ENCODE measurements at regions of chr10 and their contacts with region 1.

Region 1: DNA sequence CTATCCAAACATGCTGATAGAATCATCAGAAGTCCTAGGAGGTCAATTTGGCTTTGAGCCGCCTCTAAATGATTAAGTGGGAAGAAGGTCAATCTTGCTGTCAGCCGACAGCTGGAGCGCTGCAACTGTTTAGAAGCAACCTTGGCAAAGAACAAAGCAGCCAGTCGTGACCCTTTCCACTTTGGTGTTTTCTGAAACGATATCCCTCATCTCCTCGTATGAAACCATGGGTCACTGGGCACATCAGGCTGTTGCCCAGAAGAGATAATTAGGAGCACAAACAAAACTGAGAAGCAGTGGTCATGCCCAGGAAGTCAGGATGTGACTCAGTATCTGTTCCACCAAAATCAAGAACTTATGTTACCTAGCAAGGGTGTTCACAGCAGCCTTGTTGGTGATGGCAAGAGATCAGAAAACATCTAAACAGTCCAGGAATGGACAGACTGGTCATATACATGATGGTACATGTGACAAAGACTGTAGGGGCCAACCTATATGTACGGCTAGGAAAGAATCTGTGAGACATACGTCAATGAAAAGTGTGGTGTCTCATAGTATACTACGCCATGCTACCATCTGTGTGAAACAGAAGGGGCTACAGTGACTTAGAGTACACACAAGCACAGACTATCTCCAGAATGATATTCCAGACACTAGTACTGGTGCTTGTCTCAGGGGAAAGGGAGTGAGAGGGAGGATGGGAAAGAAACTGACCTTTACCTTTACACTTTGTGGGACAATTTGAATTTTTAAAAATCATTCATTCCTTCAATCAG is 22.4 kb downstream of the STN1 start:
- DNase-seq: peak in 1 of 2 experiments; percentile 90
- H3K4me3 ChIP-seq: peak overlapping the region; percentile 2; the same call in 1 of the 2 replicates
- H3K27ac ChIP-seq: peak overlapping the region; percentile 99
- H3K4me1 ChIP-seq: peaks cover 72% of the 10 kb centered on the region
- H3K27me3 ChIP-seq: no peaks in the 10 kb centered on the region
- CTCF ChIP-seq: no peak

Region 2: DNA sequence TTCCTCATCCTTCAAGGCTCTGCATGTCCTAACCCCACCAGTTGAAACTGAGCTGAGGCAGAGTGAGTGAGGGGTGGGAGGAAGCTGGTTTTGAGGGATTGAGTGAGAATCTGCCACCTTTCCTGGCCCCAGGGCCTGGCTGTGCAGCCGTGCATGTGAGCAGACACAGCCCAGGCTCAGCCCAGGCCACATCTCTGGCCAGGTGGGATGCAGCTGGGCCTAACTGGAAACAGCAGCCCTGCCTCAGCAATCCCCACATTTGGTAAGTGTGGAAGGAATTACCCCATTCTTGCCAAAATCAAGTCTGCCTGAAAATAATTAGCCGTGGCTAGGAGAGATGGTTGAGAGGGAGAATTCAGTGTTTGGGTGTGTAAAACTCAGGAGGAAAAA is 285.5 kb before region 1 on chr10:
- CTCF ChIA-PET with region 1: no interaction called
- POLR2A ChIA-PET with region 1: interaction called, 10 read pairs
- intact Hi-C with region 1: no loop called
- DNase-seq: no peak
- H3K4me3 ChIP-seq: no peak overlapping the region
- H3K27ac ChIP-seq: no peak overlapping the region
- H3K4me1 ChIP-seq: no peaks in the 10 kb centered on the region
- H3K27me3 ChIP-seq: no peaks in the 10 kb centered on the region
- CTCF ChIP-seq: no peak

Region 3: GRCh38 chr10:103966671-103967447 is 71.3 kb after region 1 on chr10 and contains the start of gene SLK:
- CTCF ChIA-PET with region 1: interaction called, 4 read pairs
- POLR2A ChIA-PET with region 1: interaction called, 6 read pairs
- intact Hi-C with region 1: loop called (anchors 2 kb)
- DNase-seq: peak; percentile 36 to 70
- H3K4me3 ChIP-seq: peak within 1 kb of the TSS; percentile 99
- H3K27ac ChIP-seq: peak within 1 kb of the TSS; percentile 56
- H3K4me1 ChIP-seq: peaks cover 17% of the 10 kb centered on the region
- H3K27me3 ChIP-seq: no peaks in the 10 kb centered on the region
- CTCF ChIP-seq: no peak
- total RNA-seq, gene SLK: 24.0 and 30.4 TPM in 2 replicates

Region 4: DNA sequence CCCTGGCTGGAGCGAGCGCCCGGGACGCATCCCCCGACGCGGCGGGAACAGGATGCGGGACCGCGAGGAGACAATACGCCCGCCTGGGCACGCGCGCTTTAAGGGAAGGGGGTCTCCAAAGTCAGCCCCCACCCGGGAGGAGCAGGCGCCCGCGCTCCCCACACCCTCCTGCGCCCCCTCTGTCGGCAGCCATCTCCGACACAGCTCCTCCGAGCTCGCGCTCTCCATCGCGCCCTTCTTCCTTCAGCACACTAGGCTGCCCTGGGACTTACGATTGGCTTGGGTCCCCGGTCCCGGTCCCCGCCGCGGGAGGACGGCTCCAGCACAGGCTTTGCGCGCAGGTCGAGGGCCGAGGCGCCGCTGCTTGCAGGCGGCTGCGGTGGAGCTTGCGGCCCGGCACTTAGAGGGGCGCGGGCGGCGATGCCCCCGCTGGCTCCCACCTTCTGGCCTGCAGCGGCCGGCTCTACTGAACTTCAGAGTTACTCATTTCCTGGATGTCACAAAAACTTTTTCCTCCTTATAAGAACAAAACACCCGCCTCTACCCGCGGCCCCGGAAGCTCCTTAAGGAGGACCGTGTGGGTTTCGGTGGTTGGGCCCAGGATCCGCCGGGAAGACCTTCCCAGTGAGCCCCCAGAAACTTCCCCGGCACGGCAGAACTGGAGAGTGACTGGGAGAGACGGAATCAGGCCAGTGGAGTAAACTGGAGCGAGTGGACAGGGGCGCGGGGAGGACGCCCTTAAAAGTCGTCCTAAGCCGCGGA is 442.6 kb after region 1 on chr10 and contains the start of gene ITPRIP:
- CTCF ChIA-PET with region 1: no interaction called
- POLR2A ChIA-PET with region 1: no interaction called
- intact Hi-C with region 1: loop called (anchors 10 kb)
- DNase-seq: peak in 1 of 2 experiments; percentile 52
- H3K4me3 ChIP-seq: peak within 1 kb of the TSS; percentile 92
- H3K27ac ChIP-seq: peak within 1 kb of the TSS; percentile 94
- H3K4me1 ChIP-seq: peaks cover 53% of the 10 kb centered on the region
- H3K27me3 ChIP-seq: no peaks in the 10 kb centered on the region
- CTCF ChIP-seq: no peak; the same call in 1 of the 2 replicates
- total RNA-seq, gene ITPRIP: 6.7 and 8.5 TPM in 2 replicates